Activated CD8-positive, alpha-beta T cell treated with anti-CD3 and anti-CD28 coated beads, Interleukin-2, amount 10 ng/mL, durations not matched to agents 7 days and 5 days (primary cell): ENCODE measurements at regions of chr1 and their contacts with region 1.

Region 1: DNA sequence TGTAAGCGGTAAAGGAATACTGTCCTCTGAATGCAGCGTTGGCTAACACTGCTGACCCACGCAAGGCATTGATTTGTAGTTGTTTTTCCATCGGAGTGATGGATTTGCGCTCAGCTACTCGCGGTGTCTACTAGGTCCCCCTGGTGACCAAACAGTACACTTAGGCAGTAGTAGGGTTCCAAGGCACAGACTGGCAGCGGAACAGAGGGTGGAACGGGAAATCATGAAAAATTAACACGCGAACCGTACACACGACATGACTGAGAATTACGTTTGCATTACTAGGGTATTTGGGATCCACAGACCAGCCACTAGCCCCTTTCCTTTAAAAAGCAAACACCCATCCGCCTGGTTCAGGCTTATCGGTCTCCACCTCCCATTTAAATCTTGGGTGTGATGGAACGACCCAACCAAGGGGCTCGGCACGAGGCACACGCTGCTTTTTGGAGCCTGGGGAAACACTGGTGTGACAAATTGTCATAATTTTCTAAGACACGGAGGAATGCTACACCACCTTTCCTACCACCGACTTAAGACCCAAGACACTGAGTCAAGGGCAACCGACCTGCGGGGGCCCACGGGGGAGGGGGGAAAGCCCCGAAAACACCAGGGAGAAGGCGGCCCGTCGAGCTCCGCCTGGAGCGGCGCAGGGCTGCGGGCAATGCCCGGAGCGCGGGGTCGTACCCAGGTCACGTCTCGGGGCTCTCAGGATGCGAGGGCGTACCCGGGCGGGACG is 699 bp downstream of the DIPK1A start:
- DNase-seq: peak; percentile 81
- ATAC-seq: peak; percentile 54
- H3K4me3 Mint-ChIP-seq: peak overlapping the region; percentile 92
- H3K27ac Mint-ChIP-seq: peak overlapping the region; percentile 96
- H3K4me1 Mint-ChIP-seq: peaks cover 36% of the 10 kb centered on the region
- H3K27me3 Mint-ChIP-seq: no peaks in the 10 kb centered on the region

Region 2: DNA sequence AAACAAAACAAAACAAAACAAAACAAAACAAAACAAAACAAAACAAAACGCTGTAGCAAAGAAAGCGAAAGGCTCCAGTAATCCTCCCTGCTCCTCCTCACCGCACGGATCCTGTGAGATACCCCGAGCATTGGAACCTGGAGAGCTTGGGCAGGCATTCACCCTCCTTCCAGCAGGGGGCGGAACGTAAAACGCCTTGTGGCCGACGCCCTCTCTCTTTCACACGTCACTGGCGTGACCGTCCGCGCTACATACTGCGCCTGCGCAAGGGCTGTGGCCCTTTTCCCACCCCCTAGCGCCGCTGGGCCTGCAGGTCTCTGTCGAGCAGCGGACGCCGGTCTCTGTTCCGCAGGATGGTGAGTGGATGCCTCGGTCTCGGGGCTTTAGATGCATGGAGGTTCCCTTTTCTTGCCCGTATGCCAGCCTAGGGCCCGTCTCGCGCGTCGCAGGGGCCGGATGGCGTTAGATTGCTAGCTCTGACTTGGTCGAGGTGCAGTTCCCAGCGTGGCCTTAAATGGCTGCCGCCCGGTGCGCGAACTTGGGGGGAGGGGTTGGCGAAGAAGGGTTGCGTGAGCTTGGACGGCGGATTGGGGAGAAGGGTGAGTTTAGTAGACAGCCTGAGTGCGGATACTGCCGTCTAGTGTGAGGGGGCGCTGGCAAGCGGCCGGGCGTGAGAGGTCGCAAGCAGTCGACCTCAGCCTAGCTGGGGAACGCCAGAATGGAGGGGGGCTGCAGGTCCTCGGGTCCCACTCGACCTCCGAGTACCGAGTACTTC is 128.6 kb before region 1 on chr1 and contains the start of gene RPL5:
- CTCF ChIA-PET with region 1: interaction called, 15 read pairs
- POLR2A ChIA-PET with region 1: interaction called, 20 read pairs
- DNase-seq: peak; percentile 98
- ATAC-seq: peak; percentile 91
- H3K4me3 Mint-ChIP-seq: peak within 1 kb of the TSS; percentile 96
- H3K27ac Mint-ChIP-seq: peak within 1 kb of the TSS; percentile 98
- H3K4me1 Mint-ChIP-seq: peaks cover 43% of the 10 kb centered on the region
- H3K27me3 Mint-ChIP-seq: no peaks in the 10 kb centered on the region
- total RNA-seq, gene RPL5: 816 to 821 TPM

Region 3: GRCh38 chr1:92877792-92878191 is 82.8 kb before region 1 on chr1:
- CTCF ChIA-PET with region 1: interaction called, 17 read pairs
- POLR2A ChIA-PET with region 1: interaction called, 5 read pairs
- DNase-seq: no peak
- ATAC-seq: peak; percentile 50
- H3K4me3 Mint-ChIP-seq: peak overlapping the region; percentile 13
- H3K27ac Mint-ChIP-seq: peak overlapping the region; percentile 57
- H3K4me1 Mint-ChIP-seq: peaks cover 32% of the 10 kb centered on the region
- H3K27me3 Mint-ChIP-seq: no peaks in the 10 kb centered on the region

Region 4: GRCh38 chr1:92901699-92902405 is 58.7 kb before region 1 on chr1:
- CTCF ChIA-PET with region 1: interaction called, 17 read pairs
- POLR2A ChIA-PET with region 1: interaction called, 5 read pairs
- DNase-seq: no peak
- ATAC-seq: no peak
- H3K4me3 Mint-ChIP-seq: no peak overlapping the region
- H3K27ac Mint-ChIP-seq: no peak overlapping the region
- H3K4me1 Mint-ChIP-seq: peaks cover 27% of the 10 kb centered on the region
- H3K27me3 Mint-ChIP-seq: no peaks in the 10 kb centered on the region

Region 5: DNA sequence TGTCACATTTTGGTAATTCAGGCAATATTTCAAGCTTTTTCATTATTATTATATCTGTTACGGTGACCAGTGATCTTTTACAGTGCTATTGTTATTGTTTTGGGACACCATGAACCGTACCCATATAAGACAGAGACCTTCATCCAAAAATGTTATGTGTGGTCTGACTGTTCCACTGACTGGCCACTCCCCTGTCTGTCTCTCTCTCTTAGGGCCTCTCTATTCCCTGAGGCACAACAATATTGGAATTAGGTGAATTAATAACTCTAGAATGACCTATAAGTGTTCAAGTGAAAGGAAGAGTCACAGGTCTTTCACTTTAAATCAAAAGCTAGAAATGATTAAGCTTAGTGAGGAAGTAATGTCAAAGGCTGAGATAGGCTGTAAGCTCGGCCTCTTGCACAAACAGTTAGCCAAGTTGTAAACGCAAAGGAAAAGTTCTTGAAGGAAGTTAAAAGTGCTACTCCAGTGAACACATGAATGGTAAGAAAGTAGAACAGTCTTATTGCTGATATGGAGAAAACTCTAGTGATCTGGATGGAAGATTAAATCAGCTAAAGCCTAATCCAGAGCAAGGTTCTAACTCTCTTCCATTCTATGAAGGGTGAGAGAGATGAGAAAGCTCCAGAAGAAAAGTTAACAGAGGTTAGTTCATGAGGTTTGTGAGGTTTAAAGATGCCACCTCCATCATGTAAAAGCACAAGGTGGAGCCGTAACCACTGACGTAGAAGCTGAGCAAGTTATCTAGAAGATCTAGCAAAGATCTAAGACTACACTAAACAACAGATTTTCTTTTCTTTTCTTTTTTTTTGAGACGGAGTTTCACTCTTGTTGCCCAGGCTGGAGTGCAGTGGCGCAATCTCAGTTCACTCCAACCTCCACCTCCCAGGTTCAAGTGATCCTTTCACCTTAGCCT is 20.4 kb after region 1 on chr1:
- CTCF ChIA-PET with region 1: interaction called, 219 read pairs
- POLR2A ChIA-PET with region 1: interaction called, 55 read pairs
- DNase-seq: peak; percentile 72
- ATAC-seq: peak; percentile 92
- H3K4me3 Mint-ChIP-seq: peak overlapping the region; percentile 40
- H3K27ac Mint-ChIP-seq: peak overlapping the region; percentile 96
- H3K4me1 Mint-ChIP-seq: peaks cover 64% of the 10 kb centered on the region
- H3K27me3 Mint-ChIP-seq: no peaks in the 10 kb centered on the region

Region 6: GRCh38 chr1:93036672-93037071 is 76.1 kb after region 1 on chr1:
- CTCF ChIA-PET with region 1: no interaction called
- POLR2A ChIA-PET with region 1: no interaction called
- DNase-seq: no peak
- ATAC-seq: no peak
- H3K4me3 Mint-ChIP-seq: no peak overlapping the region
- H3K27ac Mint-ChIP-seq: no peak overlapping the region
- H3K4me1 Mint-ChIP-seq: peaks cover 29% of the 10 kb centered on the region
- H3K27me3 Mint-ChIP-seq: no peaks in the 10 kb centered on the region

Region 7: GRCh38 chr1:93078986-93079654 is 118.6 kb after region 1 on chr1 and contains the start of gene MTF2:
- CTCF ChIA-PET with region 1: interaction called, 3 read pairs
- POLR2A ChIA-PET with region 1: interaction called, 12 read pairs
- DNase-seq: peak; percentile 96
- ATAC-seq: peak; percentile 94
- H3K4me3 Mint-ChIP-seq: peak within 1 kb of the TSS; percentile 97
- H3K27ac Mint-ChIP-seq: peak within 1 kb of the TSS; percentile 98
- H3K4me1 Mint-ChIP-seq: peaks cover 37% of the 10 kb centered on the region
- H3K27me3 Mint-ChIP-seq: peaks cover 2% of the 10 kb centered on the region
- total RNA-seq, gene MTF2: 56.4 to 63.2 TPM